IMR-90 (cell line): ENCODE measurements at regions of chr19 and their contacts with region 1.

Region 1: GRCh38 chr19:49929611-49930482 is 543 bp upstream of the NUP62 start:
- DNase-seq: peak; percentile 97
- ATAC-seq: peak; percentile 93
- H3K4me3 ChIP-seq: peak overlapping the region; percentile 80
- H3K27ac ChIP-seq: peak overlapping the region; percentile 75
- H3K4me1 ChIP-seq: peaks cover 4% of the 10 kb centered on the region
- H3K27me3 ChIP-seq: no peaks in the 10 kb centered on the region
- CTCF ChIP-seq: no peak
- POLR2A ChIP-seq: no peak; the same call in 1 of the 2 replicates
- RAD21 ChIP-seq: no peak

Region 2: DNA sequence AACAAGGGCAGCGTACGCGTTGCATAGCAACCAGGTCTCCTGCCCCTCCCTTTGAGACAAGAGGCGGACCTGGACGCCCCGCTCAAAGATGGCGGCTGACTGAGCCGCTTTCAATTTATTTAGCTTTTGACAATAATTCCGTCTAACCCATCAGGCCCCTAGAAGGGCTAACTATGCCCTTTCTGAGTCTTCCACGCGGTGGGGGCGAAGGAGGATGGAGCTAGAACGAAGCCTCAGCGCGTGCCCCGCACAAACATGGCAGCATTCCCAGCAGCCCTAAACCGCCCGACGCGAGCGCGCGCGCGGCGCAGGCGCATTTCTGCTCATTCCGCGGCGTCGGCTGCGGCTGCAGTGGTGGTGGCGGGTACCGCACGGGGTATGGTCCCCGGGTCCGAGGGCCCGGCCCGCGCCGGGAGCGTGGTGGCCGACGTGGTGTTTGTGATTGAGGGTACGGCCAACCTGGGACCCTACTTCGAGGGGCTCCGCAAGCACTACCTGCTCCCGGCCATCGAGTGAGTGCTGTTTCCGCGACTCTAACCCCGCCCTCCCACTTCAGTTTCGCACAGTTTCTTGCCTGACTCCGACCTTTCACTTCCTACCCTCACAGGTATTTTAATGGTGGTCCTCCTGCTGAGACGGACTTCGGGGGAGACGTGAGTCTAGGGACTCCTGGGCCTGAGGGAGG is 111.7 kb before region 1 on chr19 and contains the start of gene MED25:
- CTCF ChIA-PET with region 1: no interaction called
- POLR2A ChIA-PET with region 1: no interaction called
- dilution Hi-C with region 1: no loop called
- in situ Hi-C with region 1: no loop called
- intact Hi-C with region 1: no loop called
- DNase-seq: peak; percentile 76
- ATAC-seq: peak; percentile 76
- H3K4me3 ChIP-seq: peak within 1 kb of the TSS; percentile 68
- H3K27ac ChIP-seq: peak within 1 kb of the TSS; percentile 84
- H3K4me1 ChIP-seq: peaks cover 6% of the 10 kb centered on the region
- H3K27me3 ChIP-seq: no peaks in the 10 kb centered on the region
- CTCF ChIP-seq: no peak
- POLR2A ChIP-seq: no peak; the same call in none of the 2 replicates
- RAD21 ChIP-seq: no peak
- total RNA-seq, gene MED25: 4.7 and 5.3 TPM in 2 replicates

Region 3: DNA sequence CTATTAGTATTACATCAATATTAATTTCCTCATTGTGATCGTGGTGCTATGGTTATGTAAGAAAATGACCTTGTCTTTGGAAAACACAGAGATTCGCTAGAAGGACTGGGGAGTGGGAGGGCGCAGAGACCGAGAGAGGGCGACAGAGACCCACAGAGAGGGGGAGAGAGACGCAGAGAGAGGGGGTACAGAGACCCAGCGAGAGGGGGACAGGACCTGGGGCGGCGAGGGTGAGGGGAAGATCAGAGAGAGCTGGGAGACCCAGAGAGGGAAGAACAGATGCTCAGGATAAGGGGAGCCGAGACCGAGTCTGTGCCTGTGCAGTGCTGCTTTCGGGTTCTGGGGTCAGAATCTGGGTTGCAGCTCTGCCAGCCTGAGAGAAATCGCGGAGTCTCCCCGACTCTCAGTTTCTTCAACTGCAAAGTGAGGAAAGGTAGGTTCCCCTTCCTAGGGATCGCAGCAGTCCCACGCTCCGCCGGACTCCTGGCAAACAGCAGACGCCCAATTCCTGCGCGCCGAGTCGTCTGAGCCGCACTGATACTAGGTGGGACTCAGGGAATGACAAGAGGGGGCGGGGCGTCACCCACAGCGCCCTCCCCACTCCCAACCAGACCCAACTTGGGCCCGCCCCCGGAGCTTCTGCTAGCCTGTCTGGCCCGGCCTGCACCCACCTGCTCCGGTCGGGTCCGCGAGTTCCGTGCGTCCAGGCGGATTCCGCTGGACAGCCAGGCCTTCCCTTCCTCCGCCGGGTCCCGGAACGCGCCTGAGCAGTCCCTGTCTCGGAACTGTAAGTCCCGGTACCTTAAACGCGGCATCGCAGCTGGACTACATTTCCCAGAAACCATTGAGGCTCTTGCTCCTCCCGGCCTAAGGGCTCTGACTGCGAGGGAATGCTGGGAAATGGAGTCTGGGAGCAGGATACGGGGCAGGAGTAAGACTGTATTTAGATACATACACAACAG is 217.9 kb after region 1 on chr19:
- CTCF ChIA-PET with region 1: no interaction called
- POLR2A ChIA-PET with region 1: no interaction called
- dilution Hi-C with region 1: no loop called
- in situ Hi-C with region 1: loop called (anchors 10 kb)
- intact Hi-C with region 1: no loop called
- DNase-seq: peak; percentile 92
- ATAC-seq: peak; percentile 98
- H3K4me3 ChIP-seq: peak overlapping the region; percentile 58
- H3K27ac ChIP-seq: no peak overlapping the region
- H3K4me1 ChIP-seq: no peaks in the 10 kb centered on the region
- H3K27me3 ChIP-seq: no peaks in the 10 kb centered on the region
- CTCF ChIP-seq: peak; percentile 38
- POLR2A ChIP-seq: no peak
- RAD21 ChIP-seq: peak; percentile 30; the same call in 1 of the 2 replicates